ENCODE measurements at regions of chr3 and their contacts with region 1.

Region 1: GRCh38 chr3:8509961-8510360 is 8.3 kb downstream of the LMCD1 start:
- DNase-seq: no peak
- H3K4me3 ChIP-seq: no peak overlapping the region
- H3K27ac ChIP-seq: no peak overlapping the region
- H3K4me1 ChIP-seq: peaks cover 9% of the 10 kb centered on the region
- H3K27me3 ChIP-seq: no peaks in the 10 kb centered on the region
- CTCF ChIP-seq: no peak
- EP300 ChIP-seq: no peak
- POLR2A ChIP-seq: no peak

Region 2: DNA sequence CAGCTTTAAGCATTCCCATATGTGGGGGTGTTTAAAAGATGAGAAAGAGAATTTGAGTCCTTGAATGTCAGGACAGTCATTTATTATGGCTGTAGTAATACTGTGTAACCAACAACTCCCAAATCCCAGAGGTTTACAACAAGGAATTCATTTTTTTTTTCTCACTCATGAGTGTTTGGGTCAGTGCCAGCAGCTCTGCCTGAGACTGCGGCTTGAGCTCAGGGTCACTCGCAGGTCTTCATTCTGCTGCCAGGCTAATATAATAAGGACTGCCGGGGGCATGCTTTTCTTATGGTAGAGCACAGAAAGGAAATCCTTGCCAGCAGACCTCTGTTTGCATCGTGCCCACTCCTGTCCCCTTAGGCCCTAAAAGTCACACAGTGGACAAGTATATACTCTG is 286.2 kb before region 1 on chr3:
- intact Hi-C with region 1: no loop called
- DNase-seq: peak in 4 of 5 donors; percentile 11 to 39 (median 22)
- H3K4me3 ChIP-seq: no peak overlapping the region
- H3K27ac ChIP-seq: no peak overlapping the region
- H3K4me1 ChIP-seq: no peaks in the 10 kb centered on the region
- H3K27me3 ChIP-seq: no peaks in the 10 kb centered on the region
- CTCF ChIP-seq: no peak
- EP300 ChIP-seq: no peak
- POLR2A ChIP-seq: no peak

Region 3: DNA sequence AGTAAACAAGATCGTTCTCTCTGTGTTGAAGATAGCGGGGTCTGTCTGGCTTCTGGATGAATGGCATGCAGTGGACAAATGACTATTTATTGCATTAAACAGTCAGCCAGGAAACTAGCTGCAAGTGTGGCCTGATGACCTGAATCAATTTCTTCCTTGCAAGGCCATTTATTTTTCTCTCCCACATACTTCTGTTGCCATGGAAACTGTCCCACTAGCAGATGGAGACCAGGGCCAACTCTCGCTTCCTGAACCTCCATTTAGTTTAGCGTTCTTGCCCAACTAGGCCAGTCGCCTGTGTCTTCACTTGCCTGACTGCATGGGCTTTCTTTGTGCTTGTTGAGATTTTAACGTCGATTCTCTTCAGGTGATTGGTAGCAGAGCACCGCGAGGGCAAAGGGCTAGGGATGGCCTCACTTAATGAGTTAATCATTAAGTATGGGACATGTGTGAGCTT is 19.2 kb after region 1 on chr3:
- intact Hi-C with region 1: loop called in 1 of 4 experiments (anchors 2 kb)
- DNase-seq: peak in 3 of 5 donors; percentile 51 to 70 (median 51)
- H3K4me3 ChIP-seq: no peak overlapping the region
- H3K27ac ChIP-seq: peak overlapping the region in 1 of 2 donors; percentile 52
- H3K4me1 ChIP-seq: peaks cover 18% of the 10 kb centered on the region
- H3K27me3 ChIP-seq: no peaks in the 10 kb centered on the region
- CTCF ChIP-seq: no peak
- EP300 ChIP-seq: no peak
- POLR2A ChIP-seq: no peak

Region 4: DNA sequence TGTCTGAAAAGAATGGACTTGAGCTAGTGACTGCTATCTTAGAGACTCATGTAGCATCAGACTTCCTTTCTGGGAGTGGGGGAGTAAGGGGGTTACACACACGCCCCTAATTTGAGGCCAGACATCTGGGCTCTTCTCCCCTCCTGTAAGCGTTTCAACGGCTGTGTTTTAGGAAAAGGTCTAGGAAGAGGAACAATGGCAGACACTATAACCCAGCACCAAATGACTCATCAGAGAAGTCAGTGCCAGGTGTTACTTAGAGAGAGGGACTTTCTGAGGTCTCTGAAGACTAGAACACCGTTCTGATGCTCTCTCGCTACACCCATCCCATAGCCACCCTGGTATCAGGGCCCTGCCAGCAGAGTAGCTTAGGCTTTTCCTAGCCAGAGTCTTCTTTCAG is 69.1 kb after region 1 on chr3:
- intact Hi-C with region 1: loop called in 1 of 4 experiments (anchors 10 kb)
- DNase-seq: no peak
- H3K4me3 ChIP-seq: no peak overlapping the region
- H3K27ac ChIP-seq: no peak overlapping the region
- H3K4me1 ChIP-seq: peaks cover 19% of the 10 kb centered on the region
- H3K27me3 ChIP-seq: no peaks in the 10 kb centered on the region
- CTCF ChIP-seq: no peak
- EP300 ChIP-seq: no peak
- POLR2A ChIP-seq: no peak

Measured in ovary (tissue), 10 donors.